ENCODE measurements at regions of chr2 and their contacts with region 1.

Region 1: GRCh38 chr2:85813982-85814801 is 60.4 kb downstream of the ATOH8 start:
- DNase-seq: peak; percentile 88
- H3K4me3 Mint-ChIP-seq: no peak overlapping the region
- H3K27ac Mint-ChIP-seq: no peak overlapping the region
- H3K4me1 Mint-ChIP-seq: no peaks in the 10 kb centered on the region
- H3K27me3 Mint-ChIP-seq: peaks cover 12% of the 10 kb centered on the region

Region 2: DNA sequence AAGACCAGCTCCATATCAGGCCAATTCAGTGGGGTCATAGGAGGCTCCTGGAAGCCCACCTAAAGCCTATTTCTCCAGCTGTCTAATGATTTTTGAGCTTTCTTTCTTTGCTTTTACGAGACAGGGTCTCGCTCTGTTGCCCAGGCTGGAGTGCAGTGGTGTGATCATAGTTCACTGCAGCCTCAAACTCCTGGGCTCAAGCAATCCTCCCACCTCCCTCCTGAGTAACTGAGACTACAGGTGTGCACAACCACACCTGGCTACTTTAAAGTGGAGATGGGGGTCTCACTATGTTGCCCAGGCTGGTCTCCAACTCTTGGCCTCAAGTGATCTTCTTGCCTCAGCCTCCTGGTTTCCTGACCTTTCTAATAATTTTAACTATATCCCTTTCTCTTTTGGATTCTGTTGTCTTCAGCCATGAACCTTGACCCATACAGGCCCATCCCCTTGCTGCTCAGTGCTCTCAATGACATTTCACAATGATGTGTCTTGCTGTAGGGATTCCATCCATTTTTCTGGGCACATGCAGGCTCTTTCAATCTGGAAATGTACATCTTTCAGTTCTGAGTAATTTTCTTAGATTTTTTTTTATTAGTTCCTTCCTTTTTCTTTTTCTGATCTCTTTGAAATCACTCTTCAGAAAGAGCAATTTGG is 90.4 kb before region 1 on chr2:
- CTCF ChIA-PET with region 1: interaction called, 107 read pairs
- POLR2A ChIA-PET with region 1: no interaction called
- intact Hi-C with region 1: loop called (anchors 1 kb)
- DNase-seq: no peak
- H3K4me3 Mint-ChIP-seq: no peak overlapping the region
- H3K27ac Mint-ChIP-seq: no peak overlapping the region
- H3K4me1 Mint-ChIP-seq: no peaks in the 10 kb centered on the region
- H3K27me3 Mint-ChIP-seq: no peaks in the 10 kb centered on the region

Region 3: GRCh38 chr2:85741833-85742455 is 72.2 kb before region 1 on chr2:
- CTCF ChIA-PET with region 1: interaction called, 13 read pairs
- POLR2A ChIA-PET with region 1: no interaction called
- intact Hi-C with region 1: no loop called
- DNase-seq: no peak
- H3K4me3 Mint-ChIP-seq: no peak overlapping the region
- H3K27ac Mint-ChIP-seq: no peak overlapping the region
- H3K4me1 Mint-ChIP-seq: no peaks in the 10 kb centered on the region
- H3K27me3 Mint-ChIP-seq: peaks cover 35% of the 10 kb centered on the region

Region 4: DNA sequence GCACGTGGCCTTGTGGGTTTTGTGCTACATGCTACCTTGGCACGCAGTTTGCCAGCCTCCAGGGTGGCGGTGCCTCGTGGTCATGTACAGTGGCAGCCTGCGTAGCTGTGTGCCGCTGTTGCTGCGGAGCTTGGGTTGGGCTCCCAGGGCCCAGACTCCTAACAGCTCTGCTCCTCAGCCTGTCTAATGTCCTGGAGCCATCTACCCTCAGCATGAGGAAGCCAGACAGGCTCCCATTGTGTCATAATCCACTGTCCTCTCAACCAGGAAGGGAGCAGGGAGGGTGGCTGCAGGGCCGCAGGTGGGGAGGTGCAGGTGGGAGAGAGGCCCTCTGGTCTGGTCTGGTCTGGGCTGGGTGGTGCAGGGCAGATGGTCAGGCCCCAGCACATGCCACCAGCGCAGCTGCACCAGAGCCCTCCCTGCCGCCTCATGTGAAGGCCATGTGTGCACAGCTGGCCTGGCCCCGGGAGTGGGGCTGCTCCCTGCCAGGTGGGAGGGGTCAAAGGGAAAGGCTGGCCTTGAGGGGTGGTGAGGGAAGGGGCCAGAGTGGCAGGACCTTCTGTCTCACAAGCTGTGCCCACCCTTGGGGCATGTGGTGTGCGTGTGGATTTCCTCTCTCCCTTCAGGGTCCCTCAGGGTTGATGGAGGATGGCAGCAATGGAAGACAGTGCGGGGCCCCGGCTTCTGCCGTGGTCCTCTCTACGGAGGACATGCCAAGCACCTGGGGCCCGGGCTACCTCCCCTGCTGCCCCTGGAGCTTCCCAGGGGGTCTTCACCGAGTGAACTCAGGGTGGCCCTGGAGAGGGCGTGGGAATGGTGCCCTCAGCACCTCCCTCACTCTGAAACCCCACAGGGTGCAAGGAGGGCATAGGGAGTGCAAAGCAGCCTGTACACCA is 55.6 kb before region 1 on chr2:
- CTCF ChIA-PET with region 1: interaction called, 93 read pairs
- POLR2A ChIA-PET with region 1: no interaction called
- intact Hi-C with region 1: no loop called
- DNase-seq: no peak
- H3K4me3 Mint-ChIP-seq: no peak overlapping the region
- H3K27ac Mint-ChIP-seq: no peak overlapping the region
- H3K4me1 Mint-ChIP-seq: peaks cover 13% of the 10 kb centered on the region
- H3K27me3 Mint-ChIP-seq: peaks cover 48% of the 10 kb centered on the region

Measured in activated CD4-positive, alpha-beta memory T cell treated with anti-CD3 and anti-CD28 coated beads for 36 hours (primary cell).